CD4-positive, alpha-beta memory T cell (primary cell): ENCODE measurements at regions of chr16 and their contacts with region 1.

Region 1: DNA sequence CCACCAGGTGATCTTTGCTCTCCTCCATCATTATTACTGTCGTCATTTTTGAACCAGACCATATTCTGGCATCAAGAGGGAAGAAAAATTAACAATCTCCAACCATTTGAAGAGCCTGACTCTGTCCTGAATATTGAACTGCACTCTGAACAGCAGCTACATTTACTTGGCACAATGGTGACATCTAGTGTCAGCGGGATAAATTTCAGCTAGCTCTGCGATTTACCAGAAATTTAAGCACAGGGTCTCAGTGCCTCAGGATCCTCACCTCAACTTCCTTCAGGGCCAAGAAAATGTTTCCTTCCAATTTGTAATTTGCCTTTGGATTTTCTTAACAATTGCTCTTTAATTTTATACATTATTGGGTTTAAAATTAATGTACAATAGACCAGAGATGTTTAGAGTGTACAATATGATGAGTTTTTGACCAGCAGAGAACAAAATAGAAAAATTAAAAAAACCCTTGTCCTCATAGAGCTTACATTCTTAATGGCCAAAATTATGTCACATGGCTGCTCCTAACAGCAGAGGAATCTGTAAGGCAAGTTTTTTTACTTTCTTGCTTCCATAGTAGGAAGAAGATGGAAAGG is 10.7 kb upstream of the ZNF19 start:
- DNase-seq: peak; percentile 50 to 64 (median 56)
- H3K4me3 ChIP-seq: no peak overlapping the region
- H3K4me3 Mint-ChIP-seq: no peak overlapping the region
- H3K27ac ChIP-seq: no peak overlapping the region
- H3K27ac Mint-ChIP-seq: no peak overlapping the region
- H3K4me1 ChIP-seq: no peaks in the 10 kb centered on the region
- H3K4me1 Mint-ChIP-seq: no peaks in the 10 kb centered on the region
- H3K27me3 ChIP-seq: no peaks in the 10 kb centered on the region
- H3K27me3 Mint-ChIP-seq: peaks cover 7 to 11% of the 10 kb centered on the region in 2 donors

Region 2: DNA sequence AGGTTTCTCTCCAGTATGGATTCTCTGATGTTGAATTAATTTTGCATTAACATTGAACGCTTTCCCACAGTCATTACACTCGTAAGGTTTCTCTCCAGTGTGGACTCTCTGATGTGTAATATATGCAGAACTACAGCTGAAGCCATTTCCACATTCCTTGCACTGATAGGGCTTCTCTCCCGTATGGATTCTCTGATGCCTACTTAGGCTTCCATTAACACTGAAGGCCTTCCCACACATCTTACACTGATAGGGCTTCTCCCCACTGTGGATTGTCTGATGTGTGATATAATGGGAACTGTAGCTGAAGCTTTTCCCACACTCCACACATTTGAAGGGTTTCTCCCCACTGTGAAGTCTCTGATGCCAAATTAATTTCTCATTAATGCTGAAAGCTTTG is 50.9 kb before region 1 on chr16:
- CTCF ChIA-PET with region 1: interaction called, 5 read pairs
- POLR2A ChIA-PET with region 1: no interaction called
- intact Hi-C with region 1: loop called (anchors 5 kb)
- DNase-seq: no peak
- H3K4me3 ChIP-seq: no peak overlapping the region
- H3K4me3 Mint-ChIP-seq: no peak overlapping the region
- H3K27ac ChIP-seq: no peak overlapping the region
- H3K27ac Mint-ChIP-seq: peak overlapping the region in 1 of 7 donors; percentile 37
- H3K4me1 ChIP-seq: no peaks in the 10 kb centered on the region
- H3K4me1 Mint-ChIP-seq: no peaks in the 10 kb centered on the region
- H3K27me3 ChIP-seq: no peaks in the 10 kb centered on the region
- H3K27me3 Mint-ChIP-seq: no peaks in the 10 kb centered on the region

Region 3: DNA sequence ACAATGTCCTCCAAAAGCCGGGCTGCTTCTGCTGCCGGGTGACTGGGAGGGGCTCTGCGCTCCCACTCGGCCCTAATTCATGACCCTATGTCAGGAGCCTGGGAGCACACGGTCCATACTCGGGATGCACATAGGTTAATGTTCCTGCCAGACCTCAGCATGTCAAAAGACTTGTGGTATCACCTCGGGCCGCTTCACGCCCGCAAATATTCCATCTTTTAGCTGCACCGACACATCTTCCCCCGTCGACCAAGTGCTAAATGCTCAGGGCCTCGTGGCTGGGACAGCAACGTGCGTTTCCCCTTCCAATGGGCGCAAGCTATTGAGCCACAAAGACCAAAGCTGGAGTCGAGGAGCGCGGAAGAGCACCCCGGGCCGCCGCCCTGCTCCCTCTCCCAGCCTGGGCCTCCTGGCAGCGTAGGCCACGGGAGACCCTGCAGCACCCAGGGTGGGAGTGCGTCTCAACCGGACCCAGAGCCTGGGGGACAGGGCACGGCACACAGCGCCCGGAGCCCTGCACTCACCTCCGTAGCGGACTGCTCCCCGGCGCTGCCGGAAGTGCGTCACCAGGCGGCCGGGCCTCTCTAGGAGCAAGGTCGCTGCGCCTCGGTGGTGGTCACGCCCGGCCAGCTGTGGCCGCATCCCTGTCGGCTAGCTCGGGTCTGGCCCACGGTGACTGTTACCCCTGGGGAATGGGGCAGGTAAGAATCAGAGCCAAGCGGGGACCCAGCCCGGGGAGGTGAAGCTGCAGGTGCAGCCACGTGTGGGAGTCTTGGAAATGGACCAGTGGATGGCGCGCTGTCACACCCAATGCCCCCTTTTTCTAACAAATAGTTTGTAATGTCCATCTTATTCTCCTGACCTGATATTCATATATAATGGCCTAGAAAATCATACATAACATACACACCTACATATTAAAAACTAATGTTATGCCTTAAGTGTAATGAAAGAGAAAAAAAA is 37.9 kb before region 1 on chr16 and contains the start of gene ZNF23:
- CTCF ChIA-PET with region 1: interaction called, 7 read pairs
- POLR2A ChIA-PET with region 1: no interaction called
- intact Hi-C with region 1: loop called (anchors 5 kb)
- DNase-seq: peak; percentile 69 to 77 (median 71)
- H3K4me3 ChIP-seq: peak within 1 kb of the TSS; percentile 80 to 90
- H3K4me3 Mint-ChIP-seq: peak within 1 kb of the TSS; percentile 94 to 97 (median 96)
- H3K27ac ChIP-seq: peak within 1 kb of the TSS; percentile 76
- H3K27ac Mint-ChIP-seq: peak within 1 kb of the TSS; percentile 81 to 97 (median 95)
- H3K4me1 ChIP-seq: peaks cover 20% of the 10 kb centered on the region
- H3K4me1 Mint-ChIP-seq: peaks cover 10 to 31% (median 22%) of the 10 kb centered on the region in 4 donors
- H3K27me3 ChIP-seq: no peaks in the 10 kb centered on the region
- H3K27me3 Mint-ChIP-seq: no peaks in the 10 kb centered on the region
- total RNA-seq, gene ZNF23: 15.2 to 16.2 TPM